Aorta (tissue), 5 donors: ENCODE measurements at regions of chr6 and their contacts with region 1.

Region 1: GRCh38 chr6:4610256-4610655 is 165.9 kb upstream of the CDYL start:
- DNase-seq: peak in 1 of 2 donors; percentile 75
- ATAC-seq: peak; percentile 67
- H3K4me3 ChIP-seq: no peak overlapping the region
- H3K27ac ChIP-seq: no peak overlapping the region
- H3K4me1 ChIP-seq: peaks cover 3 to 5% of the 10 kb centered on the region in 2 donors
- H3K27me3 ChIP-seq: no peaks in the 10 kb centered on the region

Region 2: GRCh38 chr6:4358414-4359114 is 251.7 kb before region 1 on chr6:
- intact Hi-C with region 1: loop called in 1 of 2 experiments (anchors 10 kb)
- DNase-seq: peak; percentile 95 to 97
- ATAC-seq: peak; percentile 96
- H3K4me3 ChIP-seq: no peak overlapping the region
- H3K27ac ChIP-seq: peak overlapping the region; percentile 37 to 99
- H3K4me1 ChIP-seq: no peaks in the 10 kb centered on the region
- H3K27me3 ChIP-seq: no peaks in the 10 kb centered on the region

Region 3: DNA sequence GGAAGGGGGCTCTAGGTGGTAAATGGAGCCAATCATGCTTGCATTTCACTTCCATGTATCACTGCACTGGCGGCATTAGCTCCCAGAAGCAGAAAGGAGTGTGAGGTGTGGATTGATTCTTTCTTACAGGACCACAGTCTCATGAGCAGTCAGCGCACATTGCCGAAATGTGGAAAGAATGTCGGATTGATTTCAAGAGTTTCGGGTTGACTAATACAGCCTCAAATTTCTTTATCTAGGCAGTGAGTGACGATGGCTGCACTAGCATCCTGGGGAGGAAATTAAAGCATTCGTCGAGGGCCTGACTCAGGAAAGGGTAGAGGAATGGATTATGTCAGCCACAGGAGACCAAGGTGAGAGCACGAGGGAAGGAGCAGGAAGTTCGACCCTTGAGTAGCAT is 56.9 kb before region 1 on chr6:
- intact Hi-C with region 1: no loop called
- DNase-seq: no peak
- ATAC-seq: no peak
- H3K4me3 ChIP-seq: no peak overlapping the region
- H3K27ac ChIP-seq: no peak overlapping the region
- H3K4me1 ChIP-seq: no peaks in the 10 kb centered on the region
- H3K27me3 ChIP-seq: no peaks in the 10 kb centered on the region

Region 4: GRCh38 chr6:4664117-4664626 is 53.9 kb after region 1 on chr6:
- intact Hi-C with region 1: loop called in 1 of 2 experiments (anchors 10 kb)
- DNase-seq: peak; percentile 84 to 90
- ATAC-seq: peak; percentile 87
- H3K4me3 ChIP-seq: no peak overlapping the region
- H3K27ac ChIP-seq: peak overlapping the region in 1 of 2 donors; percentile 41
- H3K4me1 ChIP-seq: no peaks in the 10 kb centered on the region
- H3K27me3 ChIP-seq: no peaks in the 10 kb centered on the region